ENCODE measurements at regions of chr4 and their contacts with region 1.

Region 1: DNA sequence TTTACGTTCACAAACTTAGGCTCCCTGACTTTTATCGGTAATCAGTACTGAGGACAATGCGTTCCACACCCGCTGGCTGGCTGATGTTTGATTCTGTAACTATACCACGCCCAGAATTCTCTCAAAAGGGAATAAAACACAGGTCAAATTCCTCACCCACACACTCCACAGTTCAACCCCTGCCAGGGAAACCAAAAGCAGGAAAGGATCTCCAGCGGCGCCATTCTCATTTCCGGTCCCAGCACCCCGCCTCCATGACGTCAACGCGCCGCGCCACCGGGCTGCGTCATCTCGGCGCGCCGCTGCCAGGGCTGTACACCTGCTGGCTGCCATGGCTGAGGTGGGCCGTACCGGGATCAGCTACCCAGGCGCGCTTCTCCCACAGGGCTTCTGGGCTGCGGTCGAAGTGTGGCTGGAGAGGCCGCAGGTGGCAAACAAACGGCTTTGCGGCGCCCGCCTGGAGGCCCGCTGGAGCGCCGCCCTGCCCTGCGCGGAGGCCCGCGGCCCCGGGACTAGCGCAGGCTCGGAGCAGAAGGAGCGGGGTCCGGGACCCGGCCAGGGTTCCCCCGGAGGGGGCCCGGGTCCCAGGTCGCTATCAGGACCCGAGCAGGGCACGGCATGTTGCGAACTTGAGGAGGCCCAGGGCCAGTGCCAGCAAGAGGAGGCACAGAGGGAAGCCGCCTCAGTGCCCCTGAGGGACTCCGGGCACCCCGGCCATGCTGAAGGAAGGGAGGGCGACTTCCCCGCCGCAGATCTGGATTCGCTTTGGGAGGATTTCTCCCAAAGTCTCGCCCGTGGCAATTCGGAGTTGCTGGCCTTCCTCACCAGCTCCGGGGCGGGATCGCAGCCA is at the starts of genes ACOX3 and TRMT44:
- DNase-seq: peak; percentile 92
- ATAC-seq: peak; percentile 92
- H3K4me3 Mint-ChIP-seq: peak within 1 kb of the TSS; percentile 89
- H3K27ac Mint-ChIP-seq: peak within 1 kb of the TSS; percentile 93
- H3K4me1 Mint-ChIP-seq: peaks cover 63% of the 10 kb centered on the region
- H3K27me3 Mint-ChIP-seq: no peaks in the 10 kb centered on the region
- CTCF ChIP-seq: no peak
- total RNA-seq, gene ACOX3: 24.2 to 27.8 TPM
- total RNA-seq, gene TRMT44: 25.5 to 26.3 TPM

Region 2: DNA sequence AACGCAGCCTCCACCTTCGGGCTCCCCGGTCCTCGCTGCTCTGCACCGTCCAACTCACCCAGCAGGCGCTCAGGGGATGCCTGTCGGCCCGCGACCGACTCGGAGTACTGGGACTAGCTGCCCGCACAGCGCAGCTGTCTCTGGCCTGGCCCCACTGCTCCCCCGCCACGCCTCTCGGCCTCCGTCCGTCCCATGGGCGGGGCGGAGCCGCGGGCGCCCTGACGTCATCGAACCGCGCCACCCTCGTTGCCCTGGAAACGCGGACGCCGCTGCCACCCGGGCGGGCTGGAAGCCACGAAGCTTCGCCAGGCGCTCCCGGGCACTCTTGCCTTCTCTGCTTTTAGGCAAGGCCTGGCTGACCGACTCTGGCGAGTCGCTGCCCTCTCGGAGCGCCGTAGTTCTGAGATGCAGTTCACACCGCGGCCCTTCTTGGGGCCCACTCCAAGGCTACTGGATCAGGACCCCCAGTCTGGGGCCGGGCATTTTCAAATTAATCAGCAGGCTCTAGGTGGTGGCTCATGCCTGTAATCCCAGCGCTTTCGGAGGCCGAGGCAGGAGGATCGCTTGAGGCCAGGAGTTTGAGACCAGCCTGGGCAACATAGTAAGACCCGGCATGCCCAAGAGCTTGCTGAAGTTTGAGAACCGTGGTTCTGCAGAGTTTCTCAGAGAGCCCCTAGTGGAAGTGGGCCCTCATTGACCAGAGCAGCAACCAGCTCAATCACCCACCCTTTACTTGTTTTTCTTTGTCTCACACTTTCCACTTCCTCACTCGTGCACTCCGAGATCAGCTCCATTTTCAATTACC is 12.2 kb before region 1 on chr4:
- CTCF ChIA-PET with region 1: interaction called, 19 read pairs
- POLR2A ChIA-PET with region 1: interaction called, 34 read pairs
- intact Hi-C with region 1: no loop called
- DNase-seq: peak; percentile 86
- ATAC-seq: peak; percentile 94
- H3K4me3 Mint-ChIP-seq: peak overlapping the region; percentile 81
- H3K27ac Mint-ChIP-seq: peak overlapping the region; percentile 90
- H3K4me1 Mint-ChIP-seq: peaks cover 22% of the 10 kb centered on the region
- H3K27me3 Mint-ChIP-seq: no peaks in the 10 kb centered on the region
- CTCF ChIP-seq: peak; percentile 39

Measured in activated CD8-positive, alpha-beta T cell treated with anti-CD3 and anti-CD28 coated beads for 36 hours (primary cell).